Heart left ventricle (tissue), 16 donors: ENCODE measurements at regions of chr16 and their contacts with region 1.

Region 1: GRCh38 chr16:19067349-19068236 is at the start of gene COQ7:
- DNase-seq: peak; percentile 99 to 100 (median 99)
- ATAC-seq: peak; percentile 96 to 99 (median 98)
- H3K4me3 ChIP-seq: peak within 1 kb of the TSS; percentile 58 to 91 (median 76)
- H3K27ac ChIP-seq: peak within 1 kb of the TSS; percentile 95 to 100 (median 98)
- H3K4me1 ChIP-seq: peaks cover 0 to 23% (median 14%) of the 10 kb centered on the region in 12 donors
- H3K27me3 ChIP-seq: no peaks in the 10 kb centered on the region
- CTCF ChIP-seq: peak in 3 of 12 donors; percentile 7 to 32 (median 19)
- POLR2A ChIP-seq: peak in 1 of 2 donors; percentile 66
- total RNA-seq, gene COQ7: 24.9 to 45.1 (median 39.5) TPM

Region 2: DNA sequence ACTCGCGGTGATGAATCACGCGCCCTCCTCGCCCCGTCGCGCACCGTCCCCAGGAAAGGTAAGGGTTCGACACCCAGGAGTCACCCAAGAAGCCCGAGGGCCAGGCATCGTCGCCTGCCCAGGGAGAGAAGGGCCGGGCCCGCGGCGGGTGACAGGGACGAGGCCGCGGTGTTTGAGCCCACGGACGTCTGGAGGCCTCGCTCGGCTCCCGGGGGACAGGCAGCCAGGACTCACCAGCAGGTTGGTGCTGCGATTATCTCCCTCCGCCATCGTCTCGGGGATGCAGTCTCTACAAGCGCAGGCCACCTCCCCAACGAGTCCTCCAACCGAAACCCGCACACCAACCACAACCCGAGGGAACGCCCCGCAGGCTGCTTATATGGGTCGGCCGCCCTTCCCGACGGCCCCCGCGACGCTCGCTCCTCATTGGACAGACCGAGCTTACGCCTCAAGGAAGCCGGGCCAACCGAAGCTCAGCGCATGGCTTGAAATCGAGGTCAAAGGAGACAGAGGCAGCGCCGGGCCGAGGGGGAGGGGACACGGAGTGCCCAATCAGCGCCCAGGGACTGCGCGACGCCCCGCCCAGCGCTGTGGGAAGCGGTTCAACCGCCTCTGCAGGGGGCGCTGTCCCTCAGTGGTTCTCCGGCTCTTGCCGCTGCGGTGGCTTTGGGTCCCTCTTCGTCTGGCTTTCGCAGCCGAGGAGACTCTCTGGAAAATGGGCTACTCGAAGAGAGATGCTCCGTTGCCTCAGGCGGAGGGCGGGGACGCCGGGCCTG is 266.2 kb before region 1 on chr16 and contains the start of gene ARL6IP1:
- intact Hi-C with region 1: loop called in 3 of 10 experiments (anchors 10 kb)
- DNase-seq: peak; percentile 99 to 100 (median 99)
- ATAC-seq: peak; percentile 98 to 100 (median 99)
- H3K4me3 ChIP-seq: peak within 1 kb of the TSS; percentile 70 to 96 (median 86)
- H3K27ac ChIP-seq: peak within 1 kb of the TSS; percentile 12 to 94 (median 88)
- H3K4me1 ChIP-seq: peaks cover 3 to 74% (median 34%) of the 10 kb centered on the region in 12 donors
- H3K27me3 ChIP-seq: no peaks in the 10 kb centered on the region
- CTCF ChIP-seq: peak; percentile 88 to 99 (median 94)
- POLR2A ChIP-seq: peak; percentile 97 to 99
- total RNA-seq, gene ARL6IP1: 16.5 to 63.2 (median 22.9) TPM

Region 3: GRCh38 chr16:19005561-19006445 is 61.8 kb before region 1 on chr16:
- intact Hi-C with region 1: no loop called
- DNase-seq: peak; percentile 37 to 74 (median 60)
- ATAC-seq: peak; percentile 69 to 81 (median 72)
- H3K4me3 ChIP-seq: no peak overlapping the region
- H3K27ac ChIP-seq: peak overlapping the region in 7 of 12 donors; percentile 28 to 67 (median 47)
- H3K4me1 ChIP-seq: peaks cover 0 to 15% (median 0%) of the 10 kb centered on the region in 12 donors
- H3K27me3 ChIP-seq: no peaks in the 10 kb centered on the region
- CTCF ChIP-seq: no peak
- POLR2A ChIP-seq: no peak

Region 4: DNA sequence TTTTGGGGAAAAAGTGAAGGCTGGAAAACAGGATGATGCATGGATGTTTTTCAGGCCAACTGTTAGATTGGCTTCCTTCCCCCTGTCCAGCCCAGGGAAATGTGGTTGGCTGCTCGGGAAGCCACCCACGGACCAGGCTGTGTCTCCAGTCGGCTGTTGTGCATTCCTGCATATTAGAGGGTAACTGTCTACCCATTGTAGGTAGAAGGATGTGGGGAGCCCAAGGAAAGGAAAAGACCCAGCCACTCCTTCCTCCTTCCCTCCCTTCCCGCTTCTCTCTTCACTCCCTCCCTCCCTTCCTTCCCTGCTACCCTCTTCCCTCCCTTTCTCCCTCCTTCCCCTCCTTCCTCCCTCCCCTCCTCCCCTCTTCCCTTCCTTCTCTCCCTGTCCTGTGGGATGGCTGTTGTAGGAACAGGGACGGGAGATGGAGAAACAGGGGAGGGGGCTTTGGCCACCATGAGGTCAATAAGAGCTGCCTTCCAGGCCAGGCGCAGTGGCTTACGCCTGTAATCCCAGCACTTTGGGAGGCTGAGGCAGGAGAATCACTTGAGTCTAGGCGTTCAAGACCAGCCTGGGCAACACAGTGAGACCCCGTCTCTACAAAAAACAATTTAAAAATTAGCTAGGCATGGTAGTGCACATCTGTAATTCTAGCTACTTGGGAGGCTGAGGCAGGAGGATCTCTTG is 117.4 kb after region 1 on chr16:
- intact Hi-C with region 1: no loop called
- DNase-seq: no peak
- ATAC-seq: peak in 3 of 4 donors; percentile 49 to 59 (median 54)
- H3K4me3 ChIP-seq: no peak overlapping the region
- H3K27ac ChIP-seq: no peak overlapping the region
- H3K4me1 ChIP-seq: peaks cover 0 to 10% (median 0%) of the 10 kb centered on the region in 12 donors
- H3K27me3 ChIP-seq: no peaks in the 10 kb centered on the region
- CTCF ChIP-seq: no peak
- POLR2A ChIP-seq: no peak

Region 5: DNA sequence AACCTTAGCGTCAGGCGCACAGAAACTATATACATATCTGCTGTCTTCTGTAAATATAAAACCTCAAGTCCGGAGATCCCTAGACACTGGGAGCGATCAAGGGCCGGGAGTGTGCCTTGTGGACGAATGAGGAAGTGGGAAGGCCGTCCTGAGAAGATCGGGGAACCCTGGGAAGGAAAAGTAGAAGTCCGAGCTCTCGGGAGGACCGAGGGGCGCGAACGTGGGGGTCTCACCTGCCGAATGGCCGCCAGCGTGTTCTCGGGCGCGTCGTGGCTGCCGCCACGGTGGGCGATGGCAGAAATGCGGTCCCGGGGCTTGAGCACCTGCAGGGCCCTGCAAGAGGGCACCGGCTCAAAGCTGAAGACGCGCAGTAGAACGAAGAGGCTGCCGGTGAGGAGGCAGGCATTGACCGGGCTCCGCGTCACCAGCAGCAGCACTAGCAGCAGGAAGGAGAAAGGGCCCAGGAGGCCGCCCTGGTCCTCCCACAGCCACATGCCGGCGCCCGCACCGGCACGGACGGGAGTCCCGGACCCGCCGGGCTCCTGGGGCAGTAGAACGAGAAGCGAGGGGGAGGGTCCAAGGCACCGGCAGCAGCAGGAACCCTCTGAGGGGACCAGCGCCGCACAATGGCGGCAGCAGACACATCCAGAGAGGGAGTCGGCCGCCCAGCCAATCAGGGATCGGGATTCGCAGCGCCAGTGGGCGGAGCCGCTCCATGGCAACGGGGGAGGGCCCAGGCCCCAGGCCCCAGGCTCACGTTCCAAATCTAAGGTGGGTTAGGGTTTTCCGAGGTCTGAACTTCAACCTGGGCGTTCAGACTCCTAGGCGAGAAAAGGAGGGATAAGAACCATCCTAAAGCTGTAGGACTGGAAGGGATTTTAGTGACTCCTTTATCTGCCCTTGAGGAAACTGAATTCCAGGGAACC is 454.1 kb after region 1 on chr16 and contains the start of gene GDE1:
- intact Hi-C with region 1: loop called in 1 of 10 experiments (anchors 10 kb)
- DNase-seq: peak; percentile 96 to 97 (median 96)
- ATAC-seq: peak; percentile 88 to 95 (median 92)
- H3K4me3 ChIP-seq: peak within 1 kb of the TSS; percentile 60 to 95 (median 80)
- H3K27ac ChIP-seq: peak within 1 kb of the TSS; percentile 20 to 95 (median 87)
- H3K4me1 ChIP-seq: peaks cover 4 to 69% (median 37%) of the 10 kb centered on the region in 12 donors
- H3K27me3 ChIP-seq: no peaks in the 10 kb centered on the region
- CTCF ChIP-seq: peak in 7 of 12 donors; percentile 17 to 66 (median 43)
- POLR2A ChIP-seq: peak; percentile 42 to 95
- total RNA-seq, gene GDE1: 77.7 to 134 (median 109) TPM